Esophagus squamous epithelium (tissue), 5 donors: ENCODE measurements at regions of chr9 and their contacts with region 1.

Region 1: GRCh38 chr9:127785023-127785932 is 556 bp upstream of the CDK9 start:
- DNase-seq: peak; percentile 45
- H3K4me3 ChIP-seq: peak overlapping the region; percentile 73 to 87 (median 84)
- H3K27ac ChIP-seq: peak overlapping the region; percentile 92 to 100 (median 99)
- H3K4me1 ChIP-seq: peaks cover 0 to 73% (median 33%) of the 10 kb centered on the region in 3 donors
- H3K27me3 ChIP-seq: no peaks in the 10 kb centered on the region
- CTCF ChIP-seq: peak; percentile 92 to 99 (median 96)
- POLR2A ChIP-seq: no peak

Region 2: GRCh38 chr9:127644943-127645342 is 140.3 kb before region 1 on chr9:
- intact Hi-C with region 1: no loop called
- DNase-seq: no peak
- H3K4me3 ChIP-seq: no peak overlapping the region
- H3K27ac ChIP-seq: no peak overlapping the region
- H3K4me1 ChIP-seq: peaks cover 0 to 6% (median 0%) of the 10 kb centered on the region in 3 donors
- H3K27me3 ChIP-seq: no peaks in the 10 kb centered on the region
- CTCF ChIP-seq: no peak
- POLR2A ChIP-seq: no peak

Region 3: GRCh38 chr9:127723450-127723849 is 61.8 kb before region 1 on chr9:
- intact Hi-C with region 1: no loop called
- DNase-seq: no peak
- H3K4me3 ChIP-seq: no peak overlapping the region
- H3K27ac ChIP-seq: no peak overlapping the region
- H3K4me1 ChIP-seq: peaks cover 0 to 34% (median 6%) of the 10 kb centered on the region in 3 donors
- H3K27me3 ChIP-seq: no peaks in the 10 kb centered on the region
- CTCF ChIP-seq: no peak
- POLR2A ChIP-seq: no peak

Region 4: DNA sequence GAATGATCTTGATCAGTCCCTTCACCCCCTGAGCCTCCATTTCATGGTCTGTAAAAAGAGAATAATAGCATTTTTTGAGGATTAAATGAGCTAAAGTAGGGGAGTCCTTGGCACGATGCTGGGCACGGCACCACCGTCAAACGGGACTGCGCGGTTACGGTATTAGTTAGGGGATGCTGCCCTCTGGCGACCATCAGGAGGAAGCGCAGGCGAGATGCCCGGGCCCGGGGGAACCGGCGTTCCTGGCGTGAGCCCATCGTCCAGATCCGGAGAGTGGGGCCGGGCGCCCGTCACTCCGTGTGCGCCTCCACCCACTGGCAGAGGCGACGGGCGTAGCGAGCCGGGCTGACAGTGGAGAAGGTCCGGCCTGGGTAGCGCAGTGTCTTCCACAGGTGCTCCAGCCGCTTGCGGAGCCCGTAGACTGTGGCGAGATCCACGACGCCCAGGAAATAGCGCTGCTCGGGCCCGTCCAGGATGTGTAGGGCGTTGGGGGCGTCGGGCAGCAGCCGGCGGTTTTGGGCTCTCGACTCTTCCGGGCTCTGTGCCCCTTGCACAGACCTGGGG is 136.4 kb after region 1 on chr9:
- intact Hi-C with region 1: loop called (anchors 5 kb)
- DNase-seq: no peak
- H3K4me3 ChIP-seq: peak overlapping the region in 2 of 4 donors; percentile 25 to 51
- H3K27ac ChIP-seq: no peak overlapping the region
- H3K4me1 ChIP-seq: peaks cover 37 to 59% (median 38%) of the 10 kb centered on the region in 3 donors
- H3K27me3 ChIP-seq: peaks cover 0 to 26% (median 0%) of the 10 kb centered on the region in 4 donors
- CTCF ChIP-seq: peak; percentile 88 to 98 (median 96)
- POLR2A ChIP-seq: no peak